KBM-7 (cell line): ENCODE measurements at regions of chr10 and their contacts with region 1.

Region 1: DNA sequence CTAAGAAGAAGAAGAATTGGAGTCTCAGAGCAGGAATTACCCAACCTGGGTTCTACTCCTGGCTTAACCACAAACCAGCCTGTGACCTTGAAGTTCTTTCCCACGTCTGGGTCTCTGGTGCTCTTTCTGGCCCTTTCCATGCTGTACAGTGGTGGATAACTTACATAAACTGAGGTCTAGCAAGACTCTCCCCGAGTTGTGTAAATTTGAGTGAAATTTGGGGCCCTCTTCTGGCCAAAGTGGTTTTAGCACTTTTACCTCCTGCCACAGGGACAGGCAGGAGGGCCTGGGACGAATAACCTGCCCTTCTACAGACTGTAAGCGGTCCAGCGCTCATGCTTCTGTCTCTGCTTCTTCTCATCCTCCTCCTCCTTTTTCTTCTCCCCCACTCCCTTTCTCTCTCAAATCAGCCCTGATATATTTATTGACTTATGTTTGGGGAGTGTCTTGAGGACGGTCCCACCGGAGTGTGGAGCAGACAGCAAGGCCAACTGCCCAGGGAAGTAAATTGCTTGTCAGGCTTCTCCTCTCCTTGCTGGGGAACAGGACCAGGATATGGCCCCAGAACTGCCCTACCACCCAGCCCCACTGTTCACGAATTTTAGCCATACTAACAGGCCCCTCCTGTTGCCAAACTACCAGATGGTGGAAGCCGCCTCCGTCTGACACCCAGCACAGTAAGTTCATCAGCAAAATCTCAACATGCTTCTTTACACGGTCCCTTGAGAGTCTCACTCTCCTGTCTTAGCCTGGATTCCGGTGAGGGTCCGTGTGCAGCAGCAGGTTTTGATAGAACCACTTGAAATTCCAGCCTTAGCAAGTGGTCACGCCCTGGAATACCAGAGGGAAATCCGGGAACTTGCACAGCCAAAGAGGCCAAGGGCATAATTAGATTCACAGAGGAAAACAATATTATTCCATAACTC is 4.0 kb upstream of the SH3PXD2A start:
- DNase-seq: peak; percentile 88

Region 2: GRCh38 chr10:103712570-103713498 is 146.6 kb before region 1 on chr10:
- in situ Hi-C with region 1: loop called (anchors 10 kb)
- DNase-seq: peak; percentile 80